Activated T-helper 1 cell treated with anti-CD3 and anti-CD28 coated beads, Interleukin-12 subunit alpha, Interleukin-12 subunit beta, Interleukin-2, Interleukin-4 antibody, amounts not matched to agents 30 ng/mL and 10 ng/mL and 1 ng/mL, durations not matched to agents 14 hours and 24 hours and 36 hours (primary cell): ENCODE measurements at regions of chr12 and their contacts with region 1.

Region 1: GRCh38 chr12:9813821-9814809 is 13.2 kb upstream of the KLRF1 start:
- DNase-seq: peak; percentile 90
- H3K4me3 Mint-ChIP-seq: peak overlapping the region; percentile 87
- H3K27ac Mint-ChIP-seq: peak overlapping the region; percentile 61
- H3K4me1 Mint-ChIP-seq: peaks cover 35% of the 10 kb centered on the region
- H3K27me3 Mint-ChIP-seq: peaks cover 21% of the 10 kb centered on the region

Region 2: GRCh38 chr12:9925708-9926393 is 111.7 kb after region 1 on chr12:
- intact Hi-C with region 1: loop called (anchors 1 kb)
- DNase-seq: no peak
- H3K4me3 Mint-ChIP-seq: peak overlapping the region; percentile 66
- H3K27ac Mint-ChIP-seq: no peak overlapping the region
- H3K4me1 Mint-ChIP-seq: peaks cover 22% of the 10 kb centered on the region
- H3K27me3 Mint-ChIP-seq: peaks cover 13% of the 10 kb centered on the region

Region 3: GRCh38 chr12:9948606-9949296 is 134.6 kb after region 1 on chr12:
- intact Hi-C with region 1: loop called (anchors 5 kb)
- DNase-seq: no peak
- H3K4me3 Mint-ChIP-seq: no peak overlapping the region
- H3K27ac Mint-ChIP-seq: peak overlapping the region; percentile 18
- H3K4me1 Mint-ChIP-seq: peaks cover 54% of the 10 kb centered on the region
- H3K27me3 Mint-ChIP-seq: peaks cover 4% of the 10 kb centered on the region

Region 4: GRCh38 chr12:10012630-10013330 is 198.7 kb after region 1 on chr12:
- intact Hi-C with region 1: loop called (anchors 2 kb)
- DNase-seq: no peak
- H3K4me3 Mint-ChIP-seq: no peak overlapping the region
- H3K27ac Mint-ChIP-seq: no peak overlapping the region
- H3K4me1 Mint-ChIP-seq: no peaks in the 10 kb centered on the region
- H3K27me3 Mint-ChIP-seq: peaks cover 33% of the 10 kb centered on the region

Region 5: GRCh38 chr12:10140001-10140400 is 325.9 kb after region 1 on chr12:
- intact Hi-C with region 1: loop called (anchors 1 kb)
- DNase-seq: peak; percentile 25
- H3K4me3 Mint-ChIP-seq: no peak overlapping the region
- H3K27ac Mint-ChIP-seq: no peak overlapping the region
- H3K4me1 Mint-ChIP-seq: no peaks in the 10 kb centered on the region
- H3K27me3 Mint-ChIP-seq: peaks cover 46% of the 10 kb centered on the region

Region 6: GRCh38 chr12:10243818-10244520 is 429.9 kb after region 1 on chr12:
- intact Hi-C with region 1: no loop called
- DNase-seq: no peak
- H3K4me3 Mint-ChIP-seq: peak overlapping the region; percentile 41
- H3K27ac Mint-ChIP-seq: peak overlapping the region; percentile 10
- H3K4me1 Mint-ChIP-seq: peaks cover 21% of the 10 kb centered on the region
- H3K27me3 Mint-ChIP-seq: peaks cover 48% of the 10 kb centered on the region